ENCODE measurements at regions of chr1 and their contacts with region 1.

Region 1: GRCh38 chr1:13754510-13755103 is 54.6 kb downstream of the PRDM2 start:
- DNase-seq: no peak
- ATAC-seq: no peak
- H3K4me3 Mint-ChIP-seq: no peak overlapping the region
- H3K27ac Mint-ChIP-seq: peak overlapping the region; percentile 70
- H3K4me1 Mint-ChIP-seq: peaks cover 71% of the 10 kb centered on the region
- H3K27me3 Mint-ChIP-seq: no peaks in the 10 kb centered on the region

Region 2: GRCh38 chr1:13570924-13571323 is 183.7 kb before region 1 on chr1:
- CTCF ChIA-PET with region 1: no interaction called
- DNase-seq: no peak
- ATAC-seq: no peak
- H3K4me3 Mint-ChIP-seq: no peak overlapping the region
- H3K27ac Mint-ChIP-seq: no peak overlapping the region
- H3K4me1 Mint-ChIP-seq: no peaks in the 10 kb centered on the region
- H3K27me3 Mint-ChIP-seq: peaks cover 17% of the 10 kb centered on the region

Region 3: DNA sequence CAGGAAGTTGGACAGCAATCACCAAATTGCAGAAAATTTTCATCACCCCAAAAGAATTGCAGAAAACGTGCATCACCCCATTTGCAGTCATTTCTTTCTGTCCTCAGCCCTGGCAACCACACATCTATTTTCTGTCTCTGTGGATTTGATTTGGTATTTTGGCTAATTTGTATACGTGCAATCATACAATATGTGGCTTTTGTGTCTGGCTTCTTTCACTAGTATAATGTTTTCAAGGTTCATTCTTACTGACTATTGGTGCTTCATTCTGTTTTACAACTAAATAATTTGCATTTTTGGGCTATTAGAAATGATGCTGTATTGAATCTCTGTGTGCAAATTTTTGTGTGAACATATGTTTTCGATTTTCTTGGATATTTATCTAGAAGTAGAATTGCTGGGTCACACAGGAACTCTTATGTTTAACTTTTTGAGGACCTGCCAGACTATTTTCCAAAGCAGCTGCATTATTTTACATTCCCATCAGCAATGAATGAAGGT is 79.4 kb before region 1 on chr1:
- CTCF ChIA-PET with region 1: no interaction called
- DNase-seq: no peak
- ATAC-seq: no peak
- H3K4me3 Mint-ChIP-seq: no peak overlapping the region
- H3K27ac Mint-ChIP-seq: no peak overlapping the region
- H3K4me1 Mint-ChIP-seq: no peaks in the 10 kb centered on the region
- H3K27me3 Mint-ChIP-seq: peaks cover 29% of the 10 kb centered on the region

Region 4: DNA sequence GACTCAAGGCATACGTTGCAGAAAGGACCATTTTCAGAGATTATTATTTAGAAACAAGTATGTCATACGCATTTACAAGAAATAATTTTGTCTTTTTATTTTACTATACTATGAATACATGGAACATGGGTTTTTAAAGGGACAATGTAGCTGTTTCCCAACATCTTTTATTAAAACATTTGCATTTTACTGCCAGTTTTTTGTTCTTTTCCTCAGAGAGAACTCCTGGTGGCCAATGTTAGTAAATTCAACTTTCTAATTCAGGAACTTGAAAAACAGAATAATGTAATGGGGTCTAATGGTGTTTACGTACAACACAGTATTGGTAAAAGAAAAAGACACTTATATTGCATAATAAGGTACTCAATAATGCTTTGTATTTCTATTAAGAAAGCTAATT is 39.8 kb before region 1 on chr1:
- CTCF ChIA-PET with region 1: no interaction called
- DNase-seq: no peak
- ATAC-seq: no peak
- H3K4me3 Mint-ChIP-seq: no peak overlapping the region
- H3K27ac Mint-ChIP-seq: no peak overlapping the region
- H3K4me1 Mint-ChIP-seq: peaks cover 8% of the 10 kb centered on the region
- H3K27me3 Mint-ChIP-seq: no peaks in the 10 kb centered on the region

Region 5: GRCh38 chr1:13764588-13765332 is 10.2 kb after region 1 on chr1:
- CTCF ChIA-PET with region 1: interaction called, 11 read pairs
- DNase-seq: no peak
- ATAC-seq: no peak
- H3K4me3 Mint-ChIP-seq: no peak overlapping the region
- H3K27ac Mint-ChIP-seq: no peak overlapping the region
- H3K4me1 Mint-ChIP-seq: peaks cover 45% of the 10 kb centered on the region
- H3K27me3 Mint-ChIP-seq: no peaks in the 10 kb centered on the region

Region 6: GRCh38 chr1:13775459-13775858 is 20.9 kb after region 1 on chr1:
- CTCF ChIA-PET with region 1: no interaction called
- DNase-seq: no peak
- ATAC-seq: no peak
- H3K4me3 Mint-ChIP-seq: no peak overlapping the region
- H3K27ac Mint-ChIP-seq: no peak overlapping the region
- H3K4me1 Mint-ChIP-seq: no peaks in the 10 kb centered on the region
- H3K27me3 Mint-ChIP-seq: no peaks in the 10 kb centered on the region